ENCODE measurements at regions of chr6 and their contacts with region 1.

Region 1: DNA sequence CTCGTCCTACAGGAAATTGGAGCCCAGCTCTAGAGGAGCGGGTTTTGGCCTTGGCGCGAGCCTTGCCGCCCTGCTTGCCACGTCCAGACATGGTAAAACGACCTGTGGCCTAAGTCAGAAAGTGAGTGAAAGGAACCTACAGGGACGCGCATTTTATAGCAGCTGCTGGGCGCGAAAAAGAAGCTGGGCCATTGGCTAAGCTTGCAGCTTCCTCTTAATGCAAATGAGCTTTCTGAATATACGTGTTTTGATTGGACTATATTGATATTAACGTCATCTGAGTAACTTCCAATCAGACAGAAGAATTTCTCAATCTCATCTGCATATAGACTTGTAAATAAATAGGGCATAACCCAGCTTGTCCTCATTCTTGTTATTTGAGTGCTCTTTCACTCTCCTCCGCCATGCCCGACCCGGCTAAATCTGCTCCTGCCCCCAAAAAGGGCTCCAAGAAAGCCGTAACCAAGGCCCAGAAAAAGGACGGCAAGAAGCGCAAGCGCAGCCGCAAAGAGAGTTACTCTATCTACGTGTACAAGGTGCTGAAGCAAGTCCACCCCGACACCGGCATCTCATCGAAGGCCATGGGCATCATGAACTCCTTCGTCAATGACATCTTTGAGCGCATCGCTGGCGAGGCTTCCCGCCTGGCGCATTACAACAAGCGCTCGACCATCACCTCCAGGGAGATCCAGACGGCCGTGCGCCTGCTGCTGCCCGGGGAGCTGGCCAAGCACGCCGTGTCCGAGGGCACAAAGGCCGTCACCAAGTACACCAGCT is 18.9 kb downstream of the OR2B2 start:
- DNase-seq: peak; percentile 95
- H3K4me3 Mint-ChIP-seq: no peak overlapping the region
- H3K27ac Mint-ChIP-seq: no peak overlapping the region
- H3K4me1 Mint-ChIP-seq: peaks cover 54% of the 10 kb centered on the region
- H3K27me3 Mint-ChIP-seq: no peaks in the 10 kb centered on the region

Region 2: GRCh38 chr6:26122793-26123674 is 1770.2 kb before region 1 on chr6:
- CTCF ChIA-PET with region 1: no interaction called
- POLR2A ChIA-PET with region 1: interaction called, 28 read pairs
- DNase-seq: peak; percentile 95
- H3K4me3 Mint-ChIP-seq: peak overlapping the region; percentile 97
- H3K27ac Mint-ChIP-seq: peak overlapping the region; percentile 100
- H3K4me1 Mint-ChIP-seq: peaks cover 40% of the 10 kb centered on the region
- H3K27me3 Mint-ChIP-seq: no peaks in the 10 kb centered on the region

Region 3: GRCh38 chr6:26249957-26250697 is 1643.1 kb before region 1 on chr6:
- CTCF ChIA-PET with region 1: no interaction called
- POLR2A ChIA-PET with region 1: interaction called, 21 read pairs
- DNase-seq: peak; percentile 84
- H3K4me3 Mint-ChIP-seq: peak overlapping the region; percentile 90
- H3K27ac Mint-ChIP-seq: peak overlapping the region; percentile 93
- H3K4me1 Mint-ChIP-seq: peaks cover 42% of the 10 kb centered on the region
- H3K27me3 Mint-ChIP-seq: no peaks in the 10 kb centered on the region

Region 4: DNA sequence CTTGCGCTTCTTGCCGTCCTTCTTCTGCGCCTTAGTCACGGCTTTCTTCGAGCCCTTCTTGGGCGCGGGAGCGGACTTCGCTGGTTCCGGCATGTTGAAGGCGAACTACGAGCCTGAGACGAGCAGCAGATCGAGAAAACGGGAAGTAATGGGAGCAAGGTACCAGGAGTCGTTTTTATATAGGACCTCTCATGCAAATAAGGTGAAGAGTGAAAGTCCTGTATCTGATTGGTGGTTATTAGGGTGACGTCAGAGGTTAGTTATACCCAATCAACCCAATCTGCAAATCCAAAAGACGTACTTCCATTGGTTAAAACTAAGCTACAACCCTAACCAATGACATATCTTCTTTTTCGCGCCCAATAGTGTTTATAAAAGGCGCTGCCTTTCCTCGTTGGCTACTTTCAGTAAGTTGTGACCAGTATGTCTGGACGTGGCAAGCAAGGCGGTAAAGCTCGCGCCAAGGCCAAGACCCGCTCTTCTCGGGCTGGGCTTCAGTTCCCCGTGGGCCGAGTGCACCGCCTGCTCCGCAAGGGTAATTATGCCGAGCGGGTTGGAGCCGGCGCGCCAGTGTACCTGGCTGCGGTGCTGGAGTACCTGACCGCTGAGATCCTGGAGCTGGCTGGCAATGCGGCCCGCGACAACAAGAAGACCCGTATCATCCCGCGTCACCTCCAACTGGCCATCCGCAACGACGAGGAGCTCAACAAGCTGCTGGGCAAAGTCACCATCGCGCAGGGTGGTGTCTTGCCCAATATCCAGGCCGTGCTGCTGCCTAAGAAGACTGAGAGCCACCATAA is 746.3 kb before region 1 on chr6:
- CTCF ChIA-PET with region 1: interaction called, 3 read pairs
- POLR2A ChIA-PET with region 1: interaction called, 152 read pairs
- DNase-seq: peak; percentile 87
- H3K4me3 Mint-ChIP-seq: no peak overlapping the region
- H3K27ac Mint-ChIP-seq: no peak overlapping the region
- H3K4me1 Mint-ChIP-seq: peaks cover 31% of the 10 kb centered on the region
- H3K27me3 Mint-ChIP-seq: no peaks in the 10 kb centered on the region

Region 5: GRCh38 chr6:27772261-27773001 is 120.8 kb before region 1 on chr6:
- CTCF ChIA-PET with region 1: interaction called, 31 read pairs
- POLR2A ChIA-PET with region 1: interaction called, 35 read pairs
- DNase-seq: peak; percentile 94
- H3K4me3 Mint-ChIP-seq: peak overlapping the region; percentile 6
- H3K27ac Mint-ChIP-seq: peak overlapping the region; percentile 46
- H3K4me1 Mint-ChIP-seq: peaks cover 22% of the 10 kb centered on the region
- H3K27me3 Mint-ChIP-seq: peaks cover 19% of the 10 kb centered on the region

Region 6: GRCh38 chr6:27871924-27872638 is 21.2 kb before region 1 on chr6:
- CTCF ChIA-PET with region 1: interaction called, 190 read pairs
- POLR2A ChIA-PET with region 1: interaction called, 1,597 read pairs
- DNase-seq: peak; percentile 87
- H3K4me3 Mint-ChIP-seq: peak overlapping the region; percentile 81
- H3K27ac Mint-ChIP-seq: peak overlapping the region; percentile 99
- H3K4me1 Mint-ChIP-seq: peaks cover 60% of the 10 kb centered on the region
- H3K27me3 Mint-ChIP-seq: no peaks in the 10 kb centered on the region

Region 7: DNA sequence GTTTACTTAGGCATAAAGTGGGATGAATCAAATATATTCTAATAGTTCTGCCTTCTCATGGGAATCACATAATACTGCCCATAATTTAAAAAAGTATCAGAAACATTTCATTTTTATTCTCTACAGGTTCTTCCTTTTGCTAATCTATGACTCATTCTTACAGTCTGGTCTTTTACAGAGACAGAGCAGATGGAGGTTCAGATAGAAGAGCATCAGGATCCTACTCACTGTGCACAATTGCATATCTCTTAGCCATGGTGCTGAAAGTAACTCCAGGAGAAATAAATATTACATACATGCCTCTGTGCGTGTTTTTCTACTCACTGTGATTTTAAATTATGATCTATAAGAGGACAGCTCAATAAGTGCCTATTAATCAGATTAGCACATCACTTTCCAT is 47.5 kb after region 1 on chr6:
- CTCF ChIA-PET with region 1: no interaction called
- POLR2A ChIA-PET with region 1: no interaction called
- DNase-seq: no peak
- H3K4me3 Mint-ChIP-seq: no peak overlapping the region
- H3K27ac Mint-ChIP-seq: no peak overlapping the region
- H3K4me1 Mint-ChIP-seq: no peaks in the 10 kb centered on the region
- H3K27me3 Mint-ChIP-seq: peaks cover 14% of the 10 kb centered on the region

Region 8: DNA sequence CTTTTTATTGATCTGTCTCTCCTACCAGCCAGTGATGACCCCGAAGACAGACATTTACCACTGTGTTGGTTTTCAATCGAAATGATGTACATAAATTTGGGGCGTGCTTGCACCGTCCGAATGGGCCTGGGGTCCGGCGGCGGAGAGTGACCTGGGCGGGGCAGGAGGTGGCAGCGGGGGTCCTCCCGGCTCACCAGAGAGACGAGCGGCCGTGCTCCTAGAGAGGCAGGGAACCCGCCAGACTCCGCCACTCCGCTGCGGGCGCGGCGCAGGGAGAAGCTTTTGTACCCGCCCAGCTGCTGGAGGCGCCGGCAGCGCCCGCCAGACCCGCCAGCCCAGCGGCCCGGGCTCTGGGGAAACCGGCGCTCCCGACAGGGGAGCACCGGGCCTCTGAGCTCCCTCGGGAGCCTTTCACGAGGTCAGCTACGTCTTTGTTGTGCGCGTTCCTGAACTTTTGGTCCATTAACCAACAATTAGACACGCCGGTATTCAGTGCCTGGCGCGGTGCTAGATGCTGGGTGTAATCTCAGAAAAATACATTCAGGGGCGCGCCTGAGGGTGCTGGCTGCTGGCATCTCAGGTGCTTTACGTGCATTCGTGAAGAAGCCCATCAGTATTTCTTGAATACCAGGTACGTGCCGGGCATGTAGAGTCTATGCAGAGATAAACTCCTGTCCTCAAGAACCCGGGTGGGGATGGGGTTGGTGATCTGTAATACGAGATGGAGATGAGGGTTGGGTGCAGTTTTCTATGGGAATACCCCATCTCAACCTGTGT is 388.2 kb after region 1 on chr6 and contains the start of gene PGBD1:
- CTCF ChIA-PET with region 1: no interaction called
- POLR2A ChIA-PET with region 1: no interaction called
- DNase-seq: peak; percentile 49
- H3K4me3 Mint-ChIP-seq: peak within 1 kb of the TSS; percentile 72
- H3K27ac Mint-ChIP-seq: no peak within 1 kb of the TSS
- H3K4me1 Mint-ChIP-seq: peaks cover 13% of the 10 kb centered on the region
- H3K27me3 Mint-ChIP-seq: peaks cover 5% of the 10 kb centered on the region
- total RNA-seq, gene PGBD1: 1.8 to 2.0 TPM

Region 9: DNA sequence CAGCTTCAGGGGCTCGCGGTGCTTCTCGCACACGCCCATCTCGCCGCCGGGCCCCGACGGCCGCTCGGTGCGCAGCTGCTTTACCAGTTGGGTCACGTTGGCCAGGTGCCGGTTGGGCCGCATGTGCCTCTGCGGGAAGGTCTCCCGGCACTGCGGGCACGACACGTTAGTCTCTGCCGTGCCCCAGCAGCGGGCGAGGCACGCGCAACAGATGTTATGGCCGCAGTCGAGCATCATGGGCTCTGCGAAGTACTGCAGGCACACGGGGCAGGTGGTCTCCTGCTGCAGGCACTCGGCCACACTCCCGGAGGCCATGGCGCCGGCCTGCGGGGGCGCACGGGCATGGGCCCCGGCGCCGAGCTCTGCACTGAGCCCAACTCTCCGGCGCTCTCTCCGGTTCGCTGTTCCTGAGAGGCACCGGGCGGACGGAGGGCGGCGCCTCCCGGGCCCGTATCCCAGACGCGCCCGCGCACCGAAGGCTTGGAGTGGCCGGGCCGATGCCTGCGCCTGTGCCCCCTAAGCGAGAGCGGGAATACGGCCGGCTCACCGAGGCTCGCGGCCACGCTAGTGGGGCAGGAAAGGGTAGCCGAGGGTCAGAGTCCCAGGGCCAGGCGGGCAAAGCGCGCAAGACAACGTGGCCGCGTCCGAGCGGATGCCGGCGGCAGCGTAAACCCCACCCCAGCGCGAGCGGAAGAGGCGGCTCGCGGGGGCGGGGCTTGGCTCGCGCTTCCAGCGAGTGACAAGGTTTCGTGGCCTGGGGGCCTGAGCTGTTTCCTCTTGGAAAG is 1030.3 kb after region 1 on chr6 and contains the start of gene TRIM27:
- CTCF ChIA-PET with region 1: no interaction called
- POLR2A ChIA-PET with region 1: interaction called, 17 read pairs
- DNase-seq: peak; percentile 84
- H3K4me3 Mint-ChIP-seq: peak within 1 kb of the TSS; percentile 77
- H3K27ac Mint-ChIP-seq: peak within 1 kb of the TSS; percentile 94
- H3K4me1 Mint-ChIP-seq: peaks cover 39% of the 10 kb centered on the region
- H3K27me3 Mint-ChIP-seq: no peaks in the 10 kb centered on the region
- total RNA-seq, gene TRIM27: 56.8 to 58.0 TPM

Measured in activated CD4-positive, alpha-beta memory T cell treated with anti-CD3 and anti-CD28 coated beads, Interleukin-2, amount 10 ng/mL, durations not matched to agents 7 days and 5 days (primary cell).